ENCODE measurements at regions of chr19 and their contacts with region 1.

Region 1: GRCh38 chr19:40542202-40542859 is 34.3 kb upstream of the SHKBP1 start:
- DNase-seq: no peak

Region 2: DNA sequence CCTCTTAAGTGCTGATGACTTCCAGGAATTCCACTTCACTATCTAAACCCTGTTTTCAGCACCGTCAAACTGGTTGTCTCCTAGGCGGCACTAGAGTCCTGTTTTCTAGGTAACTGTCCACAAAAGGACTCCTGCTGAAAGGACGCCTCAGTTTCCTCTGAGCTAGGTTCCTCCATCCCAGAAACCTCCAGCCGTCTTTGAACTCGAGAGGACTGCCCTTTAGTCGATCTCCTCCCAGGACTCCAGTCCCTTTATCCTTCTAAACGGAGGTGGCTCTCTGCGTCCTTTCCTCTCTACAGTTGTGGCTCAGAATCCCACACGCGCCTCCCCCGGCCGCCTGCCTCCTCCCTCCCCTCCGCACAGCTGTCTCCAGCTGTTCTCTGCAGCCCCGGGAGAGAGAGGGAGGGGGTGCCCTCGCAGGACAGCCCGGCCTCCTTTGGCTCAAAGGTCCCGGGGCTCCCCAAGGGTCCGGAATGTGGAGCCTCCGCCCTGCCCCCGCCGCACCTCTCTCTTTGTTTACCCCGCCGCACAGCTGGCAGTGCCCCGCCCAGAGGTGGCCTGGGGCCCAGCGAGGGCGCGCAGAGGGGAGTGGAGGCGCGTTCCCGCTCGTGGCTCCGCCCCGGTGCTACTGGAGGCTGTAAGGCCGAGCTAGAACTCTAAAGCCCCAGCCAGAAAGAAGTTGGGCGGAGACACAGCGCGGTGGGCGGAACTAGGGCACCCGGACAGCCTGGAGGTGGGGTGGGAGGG is 61.2 kb after region 1 on chr19:
- CTCF ChIA-PET with region 1: interaction called, 17 read pairs
- POLR2A ChIA-PET with region 1: interaction called, 7 read pairs
- DNase-seq: peak; percentile 89

Region 3: GRCh38 chr19:40623403-40624251 is 81.3 kb after region 1 on chr19:
- CTCF ChIA-PET with region 1: no interaction called
- POLR2A ChIA-PET with region 1: no interaction called
- DNase-seq: peak; percentile 96

Measured in HEK293T (cell line).